Calu3 (cell line): ENCODE measurements at regions of chr1 and their contacts with region 1.

Region 1: GRCh38 chr1:119675349-119676345 is 27.6 kb upstream of the ZNF697 start:
- DNase-seq: peak; percentile 73
- H3K4me3 Mint-ChIP-seq: peak overlapping the region; percentile 62
- H3K27ac Mint-ChIP-seq: peak overlapping the region; percentile 56
- H3K4me1 Mint-ChIP-seq: peaks cover 40% of the 10 kb centered on the region
- H3K27me3 Mint-ChIP-seq: no peaks in the 10 kb centered on the region
- CTCF ChIP-seq: peak; percentile 47

Region 2: GRCh38 chr1:119613769-119614720 is 61.6 kb before region 1 on chr1:
- CTCF ChIA-PET with region 1: interaction called, 16 read pairs
- intact Hi-C with region 1: loop called (anchors 1 kb)
- DNase-seq: peak; percentile 88
- H3K4me3 Mint-ChIP-seq: no peak overlapping the region
- H3K27ac Mint-ChIP-seq: no peak overlapping the region
- H3K4me1 Mint-ChIP-seq: peaks cover 6% of the 10 kb centered on the region
- H3K27me3 Mint-ChIP-seq: no peaks in the 10 kb centered on the region
- CTCF ChIP-seq: peak; percentile 65

Region 3: DNA sequence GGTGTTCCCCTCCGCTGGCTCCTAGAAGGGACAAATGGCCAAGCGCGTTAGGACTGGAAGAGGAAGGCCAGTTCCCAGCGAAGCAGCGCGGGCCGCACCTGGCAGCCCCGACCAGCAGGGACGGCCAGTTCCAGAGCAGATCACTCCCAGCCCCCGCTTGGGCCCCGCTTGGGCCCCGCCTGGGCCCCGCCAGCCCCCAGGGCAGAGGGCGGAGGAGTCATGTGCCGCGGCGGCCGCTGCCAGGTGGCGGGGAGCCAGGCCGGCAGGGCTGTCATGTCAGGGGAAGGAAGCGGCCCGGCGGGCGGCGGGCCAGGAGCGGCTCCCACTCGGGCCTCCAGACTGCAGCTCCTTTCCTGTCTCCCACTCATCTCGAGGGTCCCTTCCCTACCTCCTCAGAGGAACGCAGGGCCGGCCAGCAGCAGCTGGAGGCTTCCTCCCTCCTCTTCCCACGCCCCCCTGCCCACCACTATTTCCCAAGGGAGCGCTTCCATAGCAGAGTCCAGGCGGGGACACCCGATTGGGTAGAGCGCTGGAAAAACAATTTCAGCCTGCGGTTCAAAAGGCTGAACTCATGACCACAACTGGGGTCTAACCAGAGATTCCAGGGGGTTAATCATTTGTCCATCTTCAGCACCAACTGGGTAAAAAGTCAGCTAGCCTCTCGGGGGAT is 44.1 kb before region 1 on chr1:
- CTCF ChIA-PET with region 1: no interaction called
- intact Hi-C with region 1: no loop called
- DNase-seq: peak; percentile 62
- H3K4me3 Mint-ChIP-seq: peak overlapping the region; percentile 54
- H3K27ac Mint-ChIP-seq: no peak overlapping the region
- H3K4me1 Mint-ChIP-seq: peaks cover 13% of the 10 kb centered on the region
- H3K27me3 Mint-ChIP-seq: no peaks in the 10 kb centered on the region
- CTCF ChIP-seq: no peak

Region 4: GRCh38 chr1:119647734-119648619 is 27.7 kb before region 1 on chr1 and contains the start of gene ZNF697:
- CTCF ChIA-PET with region 1: interaction called, 31 read pairs
- intact Hi-C with region 1: loop called (anchors 2 kb)
- DNase-seq: peak; percentile 93
- H3K4me3 Mint-ChIP-seq: peak within 1 kb of the TSS; percentile 98
- H3K27ac Mint-ChIP-seq: peak within 1 kb of the TSS; percentile 74
- H3K4me1 Mint-ChIP-seq: peaks cover 31% of the 10 kb centered on the region
- H3K27me3 Mint-ChIP-seq: peaks cover 8% of the 10 kb centered on the region
- CTCF ChIP-seq: no peak
- total RNA-seq, gene ZNF697: 3.9 and 4.8 TPM in 2 replicates

Region 5: DNA sequence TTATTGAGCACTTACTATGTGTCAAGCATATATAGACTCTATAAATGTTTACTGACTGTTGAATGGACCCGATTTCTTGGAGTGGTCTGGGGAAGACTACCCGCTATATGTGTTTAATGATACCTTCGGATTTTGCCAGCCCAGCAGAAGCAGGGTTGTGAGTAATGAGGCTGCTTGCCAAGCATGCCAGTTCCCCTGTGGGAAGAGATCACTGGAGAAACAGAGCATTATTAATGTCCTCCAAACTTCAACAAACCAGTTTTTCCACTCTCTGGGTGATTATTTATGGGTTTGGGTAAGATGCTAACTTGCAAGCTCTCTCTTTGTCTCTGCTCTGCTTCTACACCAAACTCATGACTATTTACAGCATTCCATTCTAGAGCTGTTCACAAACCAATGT is 11.0 kb after region 1 on chr1:
- CTCF ChIA-PET with region 1: interaction called, 17 read pairs
- intact Hi-C with region 1: no loop called
- DNase-seq: peak; percentile 46
- H3K4me3 Mint-ChIP-seq: peak overlapping the region; percentile 26
- H3K27ac Mint-ChIP-seq: peak overlapping the region; percentile 80
- H3K4me1 Mint-ChIP-seq: peaks cover 29% of the 10 kb centered on the region
- H3K27me3 Mint-ChIP-seq: no peaks in the 10 kb centered on the region
- CTCF ChIP-seq: no peak

Region 6: DNA sequence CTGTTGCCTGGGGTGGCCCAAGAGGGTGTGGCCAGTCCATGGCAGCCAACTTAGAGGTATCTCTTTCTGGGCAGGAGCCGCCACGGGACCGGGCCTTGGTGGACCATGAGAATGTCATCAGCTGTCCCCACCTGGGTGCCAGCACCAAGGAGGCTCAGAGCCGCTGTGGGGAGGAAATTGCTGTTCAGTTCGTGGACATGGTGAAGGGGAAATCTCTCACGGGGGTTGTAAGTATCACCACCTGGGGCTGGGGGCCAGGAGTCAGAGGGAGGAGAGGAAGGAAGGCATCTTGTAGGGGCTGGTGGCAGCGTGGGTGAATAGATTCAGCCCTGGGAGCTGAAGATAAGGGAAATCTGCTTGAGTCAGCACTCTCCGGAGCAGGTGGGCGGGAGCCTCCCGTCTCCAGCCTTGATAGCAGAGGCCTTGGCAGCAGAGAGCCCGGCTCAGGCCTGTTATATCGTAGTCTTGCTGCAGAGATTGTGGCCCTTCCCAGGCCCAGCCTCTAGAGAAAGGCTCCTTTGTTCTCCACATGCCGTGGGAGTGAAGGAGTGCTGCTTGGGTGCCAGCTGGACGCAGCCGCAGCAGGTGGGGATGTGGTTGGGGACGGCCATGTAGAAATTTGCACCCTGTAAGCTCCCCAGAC is 61.5 kb after region 1 on chr1:
- CTCF ChIA-PET with region 1: no interaction called
- intact Hi-C with region 1: loop called (anchors 10 kb)
- DNase-seq: peak; percentile 42
- H3K4me3 Mint-ChIP-seq: no peak overlapping the region
- H3K27ac Mint-ChIP-seq: peak overlapping the region; percentile 39
- H3K4me1 Mint-ChIP-seq: peaks cover 22% of the 10 kb centered on the region
- H3K27me3 Mint-ChIP-seq: no peaks in the 10 kb centered on the region
- CTCF ChIP-seq: no peak

Region 7: GRCh38 chr1:119935373-119935772 is 259.7 kb after region 1 on chr1:
- CTCF ChIA-PET with region 1: no interaction called
- intact Hi-C with region 1: no loop called
- DNase-seq: no peak
- H3K4me3 Mint-ChIP-seq: no peak overlapping the region
- H3K27ac Mint-ChIP-seq: no peak overlapping the region
- H3K4me1 Mint-ChIP-seq: no peaks in the 10 kb centered on the region
- H3K27me3 Mint-ChIP-seq: no peaks in the 10 kb centered on the region
- CTCF ChIP-seq: no peak

Region 8: DNA sequence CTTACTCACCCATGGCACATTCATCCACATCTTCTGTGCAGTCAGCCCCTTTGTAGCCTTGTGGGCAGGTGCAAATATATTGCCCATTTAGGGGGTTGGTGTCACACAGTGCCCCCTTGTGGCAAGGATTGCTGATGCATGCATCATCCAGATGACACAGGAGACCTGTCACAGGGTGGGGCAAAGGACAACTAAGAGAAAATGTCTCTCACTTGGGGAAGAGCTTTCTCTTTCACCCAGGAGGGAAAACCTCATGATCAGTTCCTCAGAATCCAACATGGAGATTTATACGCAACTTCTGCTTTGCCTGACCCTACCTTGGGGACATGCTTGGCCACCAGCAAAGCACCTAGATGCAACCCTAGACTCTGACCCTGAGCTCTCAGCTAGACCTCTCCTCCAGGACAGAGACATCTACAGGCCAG is 292.4 kb after region 1 on chr1:
- CTCF ChIA-PET with region 1: no interaction called
- intact Hi-C with region 1: no loop called
- DNase-seq: peak; percentile 63
- H3K4me3 Mint-ChIP-seq: no peak overlapping the region
- H3K27ac Mint-ChIP-seq: no peak overlapping the region
- H3K4me1 Mint-ChIP-seq: peaks cover 9% of the 10 kb centered on the region
- H3K27me3 Mint-ChIP-seq: no peaks in the 10 kb centered on the region
- CTCF ChIP-seq: peak; percentile 64